Naive thymus-derived CD4-positive, alpha-beta T cell (primary cell): ENCODE measurements at regions of chr6 and their contacts with region 1.

Region 1: GRCh38 chr6:132167929-132168892 is 217.0 kb upstream of the CCN2 start:
- DNase-seq: no peak
- ATAC-seq: no peak
- H3K4me3 ChIP-seq: no peak overlapping the region
- H3K4me3 Mint-ChIP-seq: no peak overlapping the region
- H3K27ac ChIP-seq: no peak overlapping the region
- H3K27ac Mint-ChIP-seq: no peak overlapping the region
- H3K4me1 ChIP-seq: no peaks in the 10 kb centered on the region
- H3K4me1 Mint-ChIP-seq: no peaks in the 10 kb centered on the region
- H3K27me3 ChIP-seq: no peaks in the 10 kb centered on the region
- H3K27me3 Mint-ChIP-seq: peaks cover 0 to 11% (median 6%) of the 10 kb centered on the region in 5 donors

Region 2: GRCh38 chr6:131029626-131030297 is 1138.4 kb before region 1 on chr6:
- CTCF ChIA-PET with region 1: no interaction called
- POLR2A ChIA-PET with region 1: no interaction called
- intact Hi-C with region 1: no loop called
- DNase-seq: no peak
- ATAC-seq: no peak
- H3K4me3 ChIP-seq: no peak overlapping the region
- H3K4me3 Mint-ChIP-seq: no peak overlapping the region
- H3K27ac ChIP-seq: no peak overlapping the region
- H3K27ac Mint-ChIP-seq: no peak overlapping the region
- H3K4me1 ChIP-seq: no peaks in the 10 kb centered on the region
- H3K4me1 Mint-ChIP-seq: peaks cover 0 to 9% (median 3%) of the 10 kb centered on the region in 7 donors
- H3K27me3 ChIP-seq: no peaks in the 10 kb centered on the region
- H3K27me3 Mint-ChIP-seq: no peaks in the 10 kb centered on the region

Region 3: DNA sequence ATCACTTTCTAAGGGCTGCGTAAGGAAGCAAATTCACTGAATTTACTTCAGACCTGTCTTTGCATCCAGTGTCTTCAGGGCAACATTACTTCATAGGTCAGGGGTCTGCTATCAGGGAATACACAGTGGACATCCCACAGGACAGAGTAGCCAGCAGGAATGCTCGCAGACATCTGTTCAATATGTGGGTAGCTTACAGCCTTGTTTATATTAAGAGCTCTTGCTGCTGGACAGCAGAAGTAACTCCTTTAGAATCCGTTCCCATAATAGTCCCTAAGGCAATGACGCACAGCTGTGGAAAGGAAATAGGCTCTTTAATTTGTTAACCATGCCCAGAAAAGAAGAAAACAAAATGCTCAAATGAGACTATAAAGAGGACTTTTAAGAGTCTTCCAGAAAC is 34.4 kb after region 1 on chr6:
- CTCF ChIA-PET with region 1: no interaction called
- POLR2A ChIA-PET with region 1: no interaction called
- intact Hi-C with region 1: loop called in 1 of 2 experiments (anchors 1 kb)
- DNase-seq: no peak
- ATAC-seq: no peak
- H3K4me3 ChIP-seq: no peak overlapping the region
- H3K4me3 Mint-ChIP-seq: no peak overlapping the region
- H3K27ac ChIP-seq: no peak overlapping the region
- H3K27ac Mint-ChIP-seq: no peak overlapping the region
- H3K4me1 ChIP-seq: no peaks in the 10 kb centered on the region
- H3K4me1 Mint-ChIP-seq: no peaks in the 10 kb centered on the region
- H3K27me3 ChIP-seq: no peaks in the 10 kb centered on the region
- H3K27me3 Mint-ChIP-seq: peaks cover 0 to 20% (median 3%) of the 10 kb centered on the region in 5 donors